Activated CD4-positive, alpha-beta memory T cell treated with anti-CD3 and anti-CD28 coated beads for 36 hours (primary cell): ENCODE measurements at regions of chr1 and their contacts with region 1.

Region 1: GRCh38 chr1:77623066-77623465 is 59.4 kb downstream of the ZZZ3 start:
- DNase-seq: no peak
- H3K4me3 Mint-ChIP-seq: no peak overlapping the region
- H3K27ac Mint-ChIP-seq: no peak overlapping the region
- H3K4me1 Mint-ChIP-seq: peaks cover 11% of the 10 kb centered on the region
- H3K27me3 Mint-ChIP-seq: no peaks in the 10 kb centered on the region

Region 2: DNA sequence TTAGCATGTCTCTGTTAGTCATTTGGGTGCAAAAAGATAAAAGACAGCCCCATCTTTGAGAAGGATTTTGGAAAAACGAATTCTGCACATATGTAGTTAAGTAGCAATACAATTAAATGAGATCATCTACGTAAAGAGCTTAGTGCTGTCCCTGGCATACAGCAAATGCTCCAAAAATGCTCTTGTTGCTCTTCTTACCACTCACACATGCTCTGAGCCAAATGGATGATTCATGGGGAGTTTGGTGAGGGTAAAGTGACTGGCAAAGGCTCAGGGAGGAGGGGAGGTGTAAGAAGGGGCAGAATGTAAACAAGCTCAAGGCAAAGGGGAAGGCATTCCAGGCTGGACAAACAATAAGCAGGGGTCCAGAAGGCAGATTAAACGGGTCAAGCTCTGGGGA is 149.4 kb before region 1 on chr1:
- CTCF ChIA-PET with region 1: no interaction called
- POLR2A ChIA-PET with region 1: no interaction called
- intact Hi-C with region 1: no loop called
- DNase-seq: no peak
- H3K4me3 Mint-ChIP-seq: no peak overlapping the region
- H3K27ac Mint-ChIP-seq: no peak overlapping the region
- H3K4me1 Mint-ChIP-seq: no peaks in the 10 kb centered on the region
- H3K27me3 Mint-ChIP-seq: no peaks in the 10 kb centered on the region

Region 3: DNA sequence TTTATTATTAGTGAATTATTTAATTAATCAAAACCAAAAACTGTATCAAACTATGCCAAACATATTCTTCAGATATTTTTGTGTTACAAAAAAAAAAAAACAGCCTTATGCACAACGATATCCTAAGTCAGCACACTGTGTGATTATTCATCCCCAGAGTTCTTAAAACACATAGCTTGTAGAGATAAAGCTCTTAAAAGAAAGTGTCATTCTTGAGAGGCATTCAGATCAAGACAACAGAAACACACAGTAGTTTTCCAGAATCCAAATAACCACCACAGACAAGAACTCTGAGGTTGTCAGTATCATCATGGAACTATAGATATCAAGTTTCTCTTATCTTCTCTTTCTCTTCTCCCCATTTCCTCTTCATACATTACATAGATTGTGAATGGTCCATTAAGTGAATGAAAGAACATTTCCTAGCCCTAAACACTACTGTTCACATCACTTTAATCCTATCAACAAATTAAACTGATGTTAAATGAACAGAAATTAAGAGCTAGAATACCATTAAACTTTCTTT is 45.9 kb after region 1 on chr1:
- CTCF ChIA-PET with region 1: no interaction called
- POLR2A ChIA-PET with region 1: no interaction called
- intact Hi-C with region 1: loop called (anchors 5 kb)
- DNase-seq: no peak
- H3K4me3 Mint-ChIP-seq: no peak overlapping the region
- H3K27ac Mint-ChIP-seq: peak overlapping the region; percentile 34
- H3K4me1 Mint-ChIP-seq: peaks cover 67% of the 10 kb centered on the region
- H3K27me3 Mint-ChIP-seq: no peaks in the 10 kb centered on the region

Region 4: DNA sequence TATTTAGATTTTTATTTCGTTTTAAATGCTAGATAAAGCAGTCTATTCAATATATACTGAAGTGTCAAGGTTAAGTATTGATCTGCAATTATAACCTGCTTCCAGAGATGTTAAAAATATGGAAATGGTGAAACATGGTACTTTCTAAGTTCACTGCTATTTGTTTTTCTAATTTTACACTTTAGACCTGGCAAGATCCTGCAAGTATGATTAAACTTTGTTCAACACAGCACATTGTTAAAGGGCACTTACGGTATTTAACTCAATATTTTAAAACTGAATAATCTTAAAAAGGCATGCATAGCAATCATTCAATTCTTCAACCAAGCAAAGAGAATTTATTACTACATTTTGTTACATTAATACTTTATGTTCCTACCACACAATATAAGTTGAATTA is 95.1 kb after region 1 on chr1:
- CTCF ChIA-PET with region 1: no interaction called
- POLR2A ChIA-PET with region 1: no interaction called
- intact Hi-C with region 1: no loop called
- DNase-seq: no peak
- H3K4me3 Mint-ChIP-seq: no peak overlapping the region
- H3K27ac Mint-ChIP-seq: no peak overlapping the region
- H3K4me1 Mint-ChIP-seq: no peaks in the 10 kb centered on the region
- H3K27me3 Mint-ChIP-seq: no peaks in the 10 kb centered on the region